Tibial artery (tissue), 4 donors: ENCODE measurements at regions of chr6 and their contacts with region 1.

Region 1: GRCh38 chr6:54185885-54186284 is 74.6 kb downstream of the MLIP start:
- DNase-seq: no peak
- H3K4me3 ChIP-seq: no peak overlapping the region
- H3K27ac ChIP-seq: no peak overlapping the region
- H3K4me1 ChIP-seq: peaks cover 0 to 4% (median 0%) of the 10 kb centered on the region in 4 donors
- H3K27me3 ChIP-seq: no peaks in the 10 kb centered on the region
- CTCF ChIP-seq: no peak

Region 2: DNA sequence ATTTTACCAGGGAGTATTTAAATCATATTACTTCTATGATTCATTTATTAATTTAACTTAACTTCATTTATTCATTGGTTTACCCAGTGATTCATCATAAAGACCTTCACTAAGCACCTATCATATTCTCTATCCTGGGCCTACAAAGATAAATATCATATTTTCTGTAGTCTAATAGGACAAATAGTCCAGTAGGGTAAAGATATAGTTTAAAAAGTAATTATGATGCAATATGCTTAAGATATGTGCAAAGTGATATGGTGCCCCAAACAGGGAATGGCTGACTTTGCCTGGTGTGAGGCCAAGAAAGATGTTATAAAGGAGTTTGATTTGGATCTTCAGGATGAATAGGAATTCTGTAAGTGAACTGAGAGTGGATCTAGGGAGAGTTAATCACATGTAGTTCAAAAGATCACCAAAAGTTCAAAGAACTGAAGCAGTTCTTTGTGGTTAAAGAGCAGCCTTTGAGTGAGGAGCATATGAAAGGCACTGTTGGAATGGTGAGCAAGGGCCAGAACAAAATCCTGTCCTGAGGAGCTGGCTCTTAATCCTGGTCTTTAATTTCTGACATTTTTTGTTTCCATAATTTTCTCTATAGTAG is 29.1 kb before region 1 on chr6:
- intact Hi-C with region 1: loop called (anchors 1 kb)
- DNase-seq: no peak
- H3K4me3 ChIP-seq: no peak overlapping the region
- H3K27ac ChIP-seq: no peak overlapping the region
- H3K4me1 ChIP-seq: peaks cover 0 to 12% (median 0%) of the 10 kb centered on the region in 4 donors
- H3K27me3 ChIP-seq: no peaks in the 10 kb centered on the region
- CTCF ChIP-seq: no peak